ENCODE measurements at regions of chr9 and their contacts with region 1.

Region 1: GRCh38 chr9:112898872-112899311 is 8.2 kb upstream of the SLC46A2 start:
- DNase-seq: no peak
- ATAC-seq: no peak
- H3K4me3 ChIP-seq: no peak overlapping the region
- H3K27ac ChIP-seq: peak overlapping the region in 1 of 12 donors; percentile 54
- H3K4me1 ChIP-seq: peaks cover 0 to 27% (median 0%) of the 10 kb centered on the region in 12 donors
- H3K27me3 ChIP-seq: peaks cover 0 to 6% (median 0%) of the 10 kb centered on the region in 9 donors
- CTCF ChIP-seq: no peak
- POLR2A ChIP-seq: no peak

Region 2: DNA sequence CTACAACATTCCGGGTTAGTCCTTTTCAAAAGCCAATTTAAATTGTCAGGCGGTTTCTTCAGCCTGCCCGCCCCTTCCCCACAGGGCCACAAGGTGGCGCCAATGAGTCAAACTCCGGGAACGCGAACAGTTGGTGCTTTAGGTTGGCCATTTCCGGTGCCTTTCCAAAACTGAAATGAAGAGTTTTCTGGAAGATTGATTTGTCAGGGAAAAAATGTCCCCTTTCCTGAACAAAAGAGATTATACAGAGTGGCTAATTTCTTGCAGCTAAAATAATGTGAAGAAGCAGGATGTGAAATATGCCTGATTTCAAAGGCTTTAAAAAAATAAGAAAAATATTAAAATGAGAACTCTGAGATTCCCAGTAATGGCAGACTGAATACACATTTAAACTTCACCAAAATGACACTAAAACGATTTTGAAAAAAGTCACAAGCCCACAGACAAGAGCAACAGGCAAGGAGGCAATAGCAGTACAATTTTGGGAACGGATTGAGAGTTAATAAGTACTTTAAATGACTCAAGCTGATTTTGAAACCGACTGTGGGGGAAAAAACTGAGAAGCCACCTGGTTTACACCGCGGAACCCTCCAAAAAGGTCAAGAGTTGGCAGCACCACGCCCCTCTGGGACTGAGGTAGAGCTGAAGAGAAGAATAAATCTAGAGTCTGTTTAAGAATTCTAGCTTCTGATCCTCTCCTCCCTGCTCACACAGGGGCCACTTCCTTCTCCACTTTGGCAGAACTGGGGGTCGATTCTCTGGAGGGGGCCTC is 53.9 kb before region 1 on chr9:
- intact Hi-C with region 1: loop called in 9 of 10 experiments (anchors 1 to 5 kb)
- DNase-seq: peak; percentile 65 to 87 (median 72)
- ATAC-seq: peak in 3 of 4 donors; percentile 57 to 80 (median 75)
- H3K4me3 ChIP-seq: no peak overlapping the region
- H3K27ac ChIP-seq: no peak overlapping the region
- H3K4me1 ChIP-seq: peaks cover 0 to 46% (median 5%) of the 10 kb centered on the region in 12 donors
- H3K27me3 ChIP-seq: no peaks in the 10 kb centered on the region
- CTCF ChIP-seq: peak; percentile 93 to 100 (median 96)
- POLR2A ChIP-seq: no peak